Prostate gland (tissue), 2 donors: ENCODE measurements at regions of chr1 and their contacts with region 1.

Region 1: DNA sequence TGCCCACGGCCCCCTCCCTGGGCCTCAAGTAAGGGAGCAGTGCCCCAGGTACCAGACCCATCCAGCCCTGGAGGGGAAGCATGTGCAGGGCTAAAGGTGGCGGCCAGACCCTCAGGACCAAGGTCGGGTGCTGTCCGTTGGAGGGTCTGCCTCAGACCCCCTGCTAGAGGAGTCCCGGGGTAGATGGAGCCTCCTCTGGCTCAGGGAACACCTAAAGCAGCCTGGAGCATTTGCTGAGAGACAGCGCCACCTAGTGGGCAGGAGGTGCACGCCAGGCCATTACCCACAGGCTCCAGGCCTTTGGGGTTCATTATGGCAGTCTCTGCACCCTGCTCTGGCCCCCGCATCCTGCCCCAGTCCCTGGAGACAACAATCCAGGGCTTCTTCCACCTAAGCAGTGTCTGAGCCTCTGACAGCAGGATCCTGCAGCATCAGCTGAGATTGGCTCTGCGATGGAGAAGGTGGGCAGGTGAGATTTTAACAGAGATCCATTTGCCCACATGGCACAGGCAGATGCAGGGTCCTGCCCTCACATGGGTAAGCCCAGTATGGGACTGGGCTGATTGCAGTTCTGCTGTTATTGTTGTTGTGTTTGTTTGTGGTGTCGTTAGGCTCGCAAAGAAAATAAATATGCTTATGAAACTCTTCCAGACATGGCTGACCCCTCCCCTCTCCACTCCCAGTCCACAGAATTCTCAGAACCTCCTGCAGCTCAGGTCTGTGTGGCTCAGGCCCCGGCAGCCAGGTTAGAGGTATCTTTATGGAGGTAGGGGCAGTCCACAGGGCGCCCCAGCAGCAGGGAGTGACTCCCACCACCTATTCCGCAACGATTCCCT is 42.4 kb downstream of the CTNNBIP1 start:
- DNase-seq: peak; percentile 81
- H3K4me3 ChIP-seq: no peak overlapping the region
- H3K27ac ChIP-seq: no peak overlapping the region
- H3K4me1 ChIP-seq: no peaks in the 10 kb centered on the region
- H3K27me3 ChIP-seq: no peaks in the 10 kb centered on the region
- CTCF ChIP-seq: peak; percentile 89 to 100 (median 96)
- POLR2A ChIP-seq: no peak

Region 2: GRCh38 chr1:9626201-9626608 is 241.4 kb before region 1 on chr1:
- intact Hi-C with region 1: loop called (anchors 1 kb)
- DNase-seq: no peak
- H3K4me3 ChIP-seq: no peak overlapping the region
- H3K27ac ChIP-seq: no peak overlapping the region
- H3K4me1 ChIP-seq: no peaks in the 10 kb centered on the region
- H3K27me3 ChIP-seq: no peaks in the 10 kb centered on the region
- CTCF ChIP-seq: no peak
- POLR2A ChIP-seq: no peak

Region 3: GRCh38 chr1:9700340-9700739 is 167.3 kb before region 1 on chr1:
- intact Hi-C with region 1: loop called (anchors 5 kb)
- DNase-seq: no peak
- H3K4me3 ChIP-seq: no peak overlapping the region
- H3K27ac ChIP-seq: no peak overlapping the region
- H3K4me1 ChIP-seq: no peaks in the 10 kb centered on the region
- H3K27me3 ChIP-seq: no peaks in the 10 kb centered on the region
- CTCF ChIP-seq: no peak
- POLR2A ChIP-seq: no peak

Region 4: GRCh38 chr1:9724706-9725476 is 142.7 kb before region 1 on chr1:
- intact Hi-C with region 1: loop called (anchors 5 kb)
- DNase-seq: no peak
- H3K4me3 ChIP-seq: no peak overlapping the region
- H3K27ac ChIP-seq: no peak overlapping the region
- H3K4me1 ChIP-seq: no peaks in the 10 kb centered on the region
- H3K27me3 ChIP-seq: no peaks in the 10 kb centered on the region
- CTCF ChIP-seq: peak; percentile 37 to 86 (median 70)
- POLR2A ChIP-seq: no peak

Region 5: DNA sequence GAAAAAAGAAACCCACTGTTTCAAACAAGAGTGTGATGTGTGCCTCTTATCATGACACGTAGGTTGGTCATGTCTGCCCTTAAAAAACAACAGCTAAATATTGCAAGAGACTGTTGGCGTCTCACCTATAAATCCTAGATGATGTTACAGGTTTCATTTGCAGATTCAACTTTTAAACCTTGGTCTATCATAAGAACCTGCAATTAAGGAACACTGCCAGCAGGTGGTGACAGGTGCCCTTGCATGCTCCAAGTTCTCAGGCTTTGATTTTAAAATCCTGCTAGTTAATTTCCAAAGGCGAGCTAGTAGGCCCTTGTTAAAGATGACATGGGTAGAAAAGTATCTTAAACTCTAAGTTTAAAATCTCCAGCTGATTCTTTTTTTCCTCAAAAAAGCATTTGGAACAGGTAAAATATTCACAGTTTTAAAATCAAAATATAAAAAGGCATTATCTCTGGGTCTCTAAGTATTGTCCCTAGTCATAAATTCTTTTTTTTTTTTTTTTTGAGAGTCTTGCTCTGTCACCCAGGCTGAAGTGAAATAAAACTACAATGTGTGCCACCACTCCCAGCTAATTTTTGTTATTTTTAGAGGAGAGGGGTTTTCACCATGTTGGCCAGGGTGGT is 83.0 kb before region 1 on chr1:
- intact Hi-C with region 1: loop called (anchors 2 kb)
- DNase-seq: peak; percentile 63
- H3K4me3 ChIP-seq: no peak overlapping the region
- H3K27ac ChIP-seq: no peak overlapping the region
- H3K4me1 ChIP-seq: no peaks in the 10 kb centered on the region
- H3K27me3 ChIP-seq: no peaks in the 10 kb centered on the region
- CTCF ChIP-seq: peak; percentile 32 to 87 (median 74)
- POLR2A ChIP-seq: no peak